ENCODE measurements at regions of chr10 and their contacts with region 1.

Region 1: GRCh38 chr10:95363303-95363912 is 72.6 kb upstream of the PDLIM1 start:
- DNase-seq: peak; percentile 84
- ATAC-seq: peak; percentile 81
- H3K4me3 ChIP-seq: no peak overlapping the region
- H3K4me3 Mint-ChIP-seq: no peak overlapping the region
- H3K27ac ChIP-seq: no peak overlapping the region
- H3K27ac Mint-ChIP-seq: no peak overlapping the region
- H3K4me1 ChIP-seq: peaks cover 0 to 4% of the 10 kb centered on the region in 2 donors
- H3K4me1 Mint-ChIP-seq: peaks cover 7% of the 10 kb centered on the region
- H3K27me3 ChIP-seq: no peaks in the 10 kb centered on the region
- H3K27me3 Mint-ChIP-seq: no peaks in the 10 kb centered on the region
- CTCF ChIP-seq: peak; percentile 94

Region 2: DNA sequence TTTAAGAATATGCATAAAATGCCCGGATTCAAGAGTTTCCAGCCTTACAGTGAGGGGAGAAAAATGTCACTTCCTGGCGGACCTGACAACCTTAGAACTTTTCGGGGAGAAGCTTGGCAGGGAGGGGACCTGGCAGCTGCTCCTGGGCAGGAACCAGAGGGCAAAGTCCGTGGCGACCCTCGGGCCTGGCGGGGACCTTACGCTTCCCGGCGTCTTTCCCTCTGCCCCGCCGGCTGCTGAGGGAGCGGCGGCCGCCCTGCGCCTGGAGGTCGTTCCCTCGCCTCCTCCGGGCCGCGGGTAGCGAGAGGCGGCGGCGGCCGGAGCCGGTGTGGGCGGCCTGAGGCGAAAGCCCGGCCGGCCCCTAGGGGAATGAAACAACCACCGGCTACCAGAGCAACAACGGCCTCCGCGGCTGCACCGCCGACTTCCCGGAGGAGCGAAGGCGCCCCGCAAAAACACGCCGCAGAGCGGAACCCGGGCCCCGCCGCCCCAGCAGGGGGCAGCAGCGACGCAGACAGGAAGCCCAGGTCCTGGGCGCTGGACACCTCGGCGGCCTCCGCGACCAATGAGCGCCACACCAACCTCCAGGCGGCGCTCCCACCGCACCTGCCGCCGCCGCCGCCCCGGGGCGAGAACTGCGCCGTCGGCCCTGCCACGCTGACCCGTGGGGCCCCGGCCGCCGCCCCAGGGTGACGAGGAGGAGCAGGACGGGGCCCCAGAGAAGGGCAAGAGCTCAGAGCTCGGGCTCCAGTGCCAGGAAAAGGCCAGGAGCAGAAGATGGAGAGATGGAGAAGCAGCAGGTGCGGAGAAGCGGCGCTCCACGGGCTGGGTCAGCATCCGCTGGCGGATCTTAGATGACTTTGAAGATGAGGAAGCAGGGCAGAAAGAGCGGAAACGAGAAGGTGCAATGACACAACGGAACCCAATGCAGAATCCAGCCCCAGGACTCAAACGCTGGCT is 179.9 kb before region 1 on chr10:
- CTCF ChIA-PET with region 1: interaction called, 27 read pairs
- POLR2A ChIA-PET with region 1: interaction called, 4 read pairs
- intact Hi-C with region 1: loop called (anchors 1 kb)
- DNase-seq: peak; percentile 89
- ATAC-seq: peak; percentile 97
- H3K4me3 ChIP-seq: peak overlapping the region; percentile 41 to 75 (median 55)
- H3K4me3 Mint-ChIP-seq: peak overlapping the region; percentile 87
- H3K27ac ChIP-seq: peak overlapping the region; percentile 25 to 79
- H3K27ac Mint-ChIP-seq: peak overlapping the region; percentile 82
- H3K4me1 ChIP-seq: peaks cover 0 to 7% of the 10 kb centered on the region in 2 donors
- H3K4me1 Mint-ChIP-seq: peaks cover 7% of the 10 kb centered on the region
- H3K27me3 ChIP-seq: no peaks in the 10 kb centered on the region
- H3K27me3 Mint-ChIP-seq: no peaks in the 10 kb centered on the region
- CTCF ChIP-seq: peak; percentile 97

Region 3: DNA sequence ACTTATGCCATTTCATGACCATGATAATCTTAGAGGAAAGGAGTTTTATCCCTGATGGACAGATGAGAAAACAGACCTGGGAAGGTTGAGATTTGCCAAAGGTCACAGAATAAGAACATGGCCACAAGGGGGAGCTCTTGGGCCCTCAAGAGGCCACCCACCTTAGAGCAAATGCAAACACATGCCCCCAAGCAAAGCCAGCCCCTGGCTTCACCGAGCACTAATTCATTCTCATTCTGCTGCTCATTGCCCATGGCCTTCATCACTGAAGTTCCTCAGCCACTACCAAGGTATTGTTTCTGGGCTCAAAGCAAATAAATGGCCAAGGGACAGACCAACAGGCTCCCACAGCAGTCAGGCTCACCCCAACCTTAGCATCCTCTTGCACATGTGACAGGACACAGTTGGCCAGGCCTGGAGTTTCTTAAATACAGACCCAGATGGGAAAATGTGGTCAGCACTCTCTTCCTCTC is 116.8 kb before region 1 on chr10:
- CTCF ChIA-PET with region 1: interaction called, 644 read pairs
- POLR2A ChIA-PET with region 1: interaction called, 4 read pairs
- intact Hi-C with region 1: loop called (anchors 1 kb)
- DNase-seq: peak; percentile 88
- ATAC-seq: peak; percentile 85
- H3K4me3 ChIP-seq: no peak overlapping the region
- H3K4me3 Mint-ChIP-seq: no peak overlapping the region
- H3K27ac ChIP-seq: peak overlapping the region in 1 of 2 donors; percentile 0
- H3K27ac Mint-ChIP-seq: peak overlapping the region; percentile 59
- H3K4me1 ChIP-seq: peaks cover 7 to 14% of the 10 kb centered on the region in 2 donors
- H3K4me1 Mint-ChIP-seq: peaks cover 28% of the 10 kb centered on the region
- H3K27me3 ChIP-seq: no peaks in the 10 kb centered on the region
- H3K27me3 Mint-ChIP-seq: no peaks in the 10 kb centered on the region
- CTCF ChIP-seq: peak; percentile 89

Region 4: DNA sequence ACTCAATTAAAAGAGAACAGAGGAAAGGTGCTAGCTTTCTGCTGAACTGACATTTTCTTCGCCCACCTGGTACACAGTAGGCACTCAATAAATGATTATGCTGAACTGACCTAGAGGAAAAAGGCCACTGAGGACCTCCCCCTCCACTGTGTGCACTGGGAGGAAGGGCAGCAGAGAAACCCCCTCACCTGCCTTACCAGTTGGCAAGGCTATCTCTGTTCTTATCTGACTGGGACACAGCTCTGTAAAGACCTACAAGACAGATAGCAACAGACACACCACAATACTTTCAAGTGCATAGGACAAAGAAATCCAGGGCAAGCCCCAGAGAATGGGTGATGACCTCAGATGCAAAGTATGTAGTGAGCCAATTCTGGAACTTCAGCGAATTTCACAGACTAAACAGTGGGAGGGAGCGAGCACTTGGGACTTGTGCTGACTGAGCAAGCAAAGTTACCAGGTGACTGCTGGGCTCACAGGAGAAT is 103.0 kb before region 1 on chr10:
- CTCF ChIA-PET with region 1: interaction called, 38 read pairs
- POLR2A ChIA-PET with region 1: interaction called, 3 read pairs
- intact Hi-C with region 1: no loop called
- DNase-seq: no peak
- ATAC-seq: no peak
- H3K4me3 ChIP-seq: no peak overlapping the region
- H3K4me3 Mint-ChIP-seq: no peak overlapping the region
- H3K27ac ChIP-seq: peak overlapping the region in 1 of 2 donors; percentile 41
- H3K27ac Mint-ChIP-seq: no peak overlapping the region
- H3K4me1 ChIP-seq: peaks cover 16 to 29% of the 10 kb centered on the region in 2 donors
- H3K4me1 Mint-ChIP-seq: peaks cover 33% of the 10 kb centered on the region
- H3K27me3 ChIP-seq: no peaks in the 10 kb centered on the region
- H3K27me3 Mint-ChIP-seq: no peaks in the 10 kb centered on the region
- CTCF ChIP-seq: no peak

Region 5: DNA sequence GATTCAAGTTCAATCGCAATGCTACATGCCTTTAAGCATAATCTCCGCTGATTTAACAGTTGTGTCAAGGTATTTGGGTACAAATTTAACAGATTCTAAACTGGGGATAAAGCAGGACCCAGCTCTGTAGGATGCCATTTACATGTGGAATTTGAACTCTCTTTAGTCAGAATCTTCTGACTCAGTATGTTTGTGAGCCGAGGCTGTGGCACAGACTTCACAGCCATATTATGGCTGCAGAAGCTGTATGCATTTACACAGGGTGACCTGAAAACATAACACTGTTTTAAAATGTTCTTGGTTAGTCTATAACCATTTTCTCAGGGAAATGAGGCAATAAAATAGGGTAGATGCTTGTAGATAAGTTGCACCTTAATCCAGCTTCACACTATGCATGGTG is 81.3 kb before region 1 on chr10:
- CTCF ChIA-PET with region 1: interaction called, 33 read pairs
- POLR2A ChIA-PET with region 1: no interaction called
- intact Hi-C with region 1: no loop called
- DNase-seq: no peak
- ATAC-seq: no peak
- H3K4me3 ChIP-seq: no peak overlapping the region
- H3K4me3 Mint-ChIP-seq: no peak overlapping the region
- H3K27ac ChIP-seq: no peak overlapping the region
- H3K27ac Mint-ChIP-seq: no peak overlapping the region
- H3K4me1 ChIP-seq: peaks cover 49 to 59% of the 10 kb centered on the region in 2 donors
- H3K4me1 Mint-ChIP-seq: peaks cover 81% of the 10 kb centered on the region
- H3K27me3 ChIP-seq: no peaks in the 10 kb centered on the region
- H3K27me3 Mint-ChIP-seq: no peaks in the 10 kb centered on the region
- CTCF ChIP-seq: no peak

Region 6: GRCh38 chr10:95308389-95309302 is 54.8 kb before region 1 on chr10:
- CTCF ChIA-PET with region 1: interaction called, 15 read pairs
- POLR2A ChIA-PET with region 1: no interaction called
- intact Hi-C with region 1: no loop called
- DNase-seq: no peak
- ATAC-seq: no peak
- H3K4me3 ChIP-seq: no peak overlapping the region
- H3K4me3 Mint-ChIP-seq: no peak overlapping the region
- H3K27ac ChIP-seq: no peak overlapping the region
- H3K27ac Mint-ChIP-seq: peak overlapping the region; percentile 51
- H3K4me1 ChIP-seq: peaks cover 16 to 22% of the 10 kb centered on the region in 2 donors
- H3K4me1 Mint-ChIP-seq: peaks cover 25% of the 10 kb centered on the region
- H3K27me3 ChIP-seq: peaks cover 0 to 4% (median 0%) of the 10 kb centered on the region in 4 experiments
- H3K27me3 Mint-ChIP-seq: no peaks in the 10 kb centered on the region
- CTCF ChIP-seq: no peak

Region 7: GRCh38 chr10:95374597-95375209 is 11.3 kb after region 1 on chr10:
- CTCF ChIA-PET with region 1: interaction called, 76 read pairs
- POLR2A ChIA-PET with region 1: no interaction called
- intact Hi-C with region 1: no loop called
- DNase-seq: peak; percentile 71
- ATAC-seq: peak; percentile 53
- H3K4me3 ChIP-seq: no peak overlapping the region
- H3K4me3 Mint-ChIP-seq: no peak overlapping the region
- H3K27ac ChIP-seq: no peak overlapping the region
- H3K27ac Mint-ChIP-seq: no peak overlapping the region
- H3K4me1 ChIP-seq: no peaks in the 10 kb centered on the region
- H3K4me1 Mint-ChIP-seq: no peaks in the 10 kb centered on the region
- H3K27me3 ChIP-seq: peaks cover 0 to 9% (median 1%) of the 10 kb centered on the region in 4 experiments
- H3K27me3 Mint-ChIP-seq: peaks cover 55% of the 10 kb centered on the region
- CTCF ChIP-seq: peak; percentile 63

Region 8: DNA sequence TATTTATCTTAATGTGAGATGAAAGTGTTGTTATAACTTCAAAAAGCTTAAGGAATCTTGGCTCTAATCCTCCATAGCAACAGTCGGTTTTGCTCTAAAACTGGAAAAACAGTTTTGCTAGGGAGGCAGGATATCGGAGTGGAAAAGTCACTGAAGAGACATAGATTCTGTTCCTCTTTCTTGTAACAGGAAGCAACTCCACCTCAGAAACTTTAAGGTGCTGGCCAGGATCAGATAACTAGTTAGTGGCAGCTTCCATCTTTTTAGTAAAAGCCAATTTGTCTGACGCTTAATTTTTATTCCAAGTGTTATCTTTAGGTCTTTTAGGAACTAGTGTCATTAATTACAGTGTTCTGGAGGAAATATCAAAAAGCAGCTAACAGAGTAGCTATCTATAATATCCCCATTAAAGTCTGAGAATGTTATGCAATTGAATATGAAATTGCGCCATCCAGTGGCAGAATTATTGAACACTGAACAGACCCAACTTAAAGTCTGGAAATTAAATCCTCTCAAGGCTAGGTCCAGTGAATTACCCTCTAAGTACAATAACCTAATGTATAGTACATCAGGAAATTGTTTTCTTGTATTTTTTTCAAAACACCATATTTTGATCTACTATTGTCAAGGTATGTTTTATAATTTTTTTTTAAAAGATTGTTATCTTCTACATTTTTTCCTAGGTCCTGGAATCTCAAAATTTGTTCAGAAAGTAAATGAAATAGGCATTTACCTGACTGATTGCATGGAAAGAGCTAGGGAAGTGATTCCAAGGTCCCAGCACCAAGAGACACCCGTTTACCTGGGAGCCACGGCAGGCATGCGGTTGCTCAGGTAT is 478.5 kb after region 1 on chr10:
- CTCF ChIA-PET with region 1: no interaction called
- POLR2A ChIA-PET with region 1: no interaction called
- intact Hi-C with region 1: no loop called
- DNase-seq: peak; percentile 85
- ATAC-seq: peak; percentile 42
- H3K4me3 ChIP-seq: peak overlapping the region in 2 of 5 experiments; percentile 23 to 48
- H3K4me3 Mint-ChIP-seq: peak overlapping the region; percentile 79
- H3K27ac ChIP-seq: peak overlapping the region; percentile 59 to 89
- H3K27ac Mint-ChIP-seq: peak overlapping the region; percentile 94
- H3K4me1 ChIP-seq: peaks cover 52 to 55% of the 10 kb centered on the region in 2 donors
- H3K4me1 Mint-ChIP-seq: peaks cover 48% of the 10 kb centered on the region
- H3K27me3 ChIP-seq: no peaks in the 10 kb centered on the region
- H3K27me3 Mint-ChIP-seq: no peaks in the 10 kb centered on the region
- CTCF ChIP-seq: peak; percentile 96